ENCODE measurements at regions of chr6 and their contacts with region 1.

Region 1: DNA sequence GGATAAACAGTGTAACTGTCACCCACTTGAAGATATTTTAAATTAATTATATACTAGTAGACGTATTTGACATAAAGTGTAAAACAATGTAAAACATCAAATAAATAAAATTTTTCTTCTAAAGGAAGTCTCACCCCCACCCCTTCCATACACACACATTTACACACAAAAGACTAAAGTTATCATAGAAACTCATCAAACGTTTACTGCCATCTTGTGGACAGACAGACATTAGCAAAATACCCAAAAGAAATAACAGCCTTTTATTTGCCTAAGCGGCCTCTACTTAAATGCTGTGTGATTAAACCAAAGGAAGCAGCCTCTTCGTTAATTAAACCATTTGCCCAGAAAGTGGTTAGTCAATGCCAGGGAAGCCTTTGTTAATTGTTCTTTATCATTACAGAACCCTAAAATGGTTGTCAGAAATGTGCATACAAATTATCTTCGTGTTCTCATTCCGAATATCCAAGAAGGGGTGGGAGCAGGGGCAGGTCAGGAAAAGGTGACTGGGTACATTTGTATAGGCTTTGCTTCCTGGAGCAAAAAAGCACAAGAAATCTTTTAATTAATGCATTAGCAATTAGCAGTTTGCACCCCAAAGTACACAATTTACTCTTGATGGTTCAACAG is 176.2 kb upstream of the SASH1 start:
- DNase-seq: no peak
- H3K4me3 Mint-ChIP-seq: no peak overlapping the region
- H3K27ac Mint-ChIP-seq: no peak overlapping the region
- H3K4me1 Mint-ChIP-seq: no peaks in the 10 kb centered on the region
- H3K27me3 Mint-ChIP-seq: peaks cover 3% of the 10 kb centered on the region

Region 2: DNA sequence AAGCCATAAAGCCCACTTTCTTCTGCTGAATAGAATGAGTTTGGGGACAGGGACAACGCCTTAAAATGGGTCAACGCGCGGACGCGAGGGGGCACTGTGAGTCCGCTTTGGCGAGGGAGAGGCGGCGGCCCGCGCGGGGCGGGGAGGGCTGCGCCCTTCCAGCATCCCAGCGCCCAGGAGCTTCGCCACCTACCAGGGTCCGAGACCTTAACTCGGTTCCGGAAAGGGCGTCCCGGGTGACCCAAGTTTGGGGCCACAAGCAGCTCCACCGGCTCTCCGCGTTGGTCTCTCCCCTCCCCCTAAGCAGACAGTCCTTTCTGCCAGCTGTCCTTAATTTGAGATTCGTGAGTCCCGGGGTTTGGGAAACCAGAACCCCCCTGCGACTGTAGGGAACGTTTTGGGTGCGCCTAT is 659.7 kb before region 1 on chr6:
- CTCF ChIA-PET with region 1: interaction called, 19 read pairs
- DNase-seq: peak; percentile 57
- H3K4me3 Mint-ChIP-seq: no peak overlapping the region
- H3K27ac Mint-ChIP-seq: no peak overlapping the region
- H3K4me1 Mint-ChIP-seq: peaks cover 15% of the 10 kb centered on the region
- H3K27me3 Mint-ChIP-seq: peaks cover 57% of the 10 kb centered on the region

Region 3: GRCh38 chr6:148146717-148147462 is 19.6 kb before region 1 on chr6:
- CTCF ChIA-PET with region 1: interaction called, 11 read pairs
- DNase-seq: peak; percentile 42
- H3K4me3 Mint-ChIP-seq: no peak overlapping the region
- H3K27ac Mint-ChIP-seq: peak overlapping the region; percentile 46
- H3K4me1 Mint-ChIP-seq: peaks cover 7% of the 10 kb centered on the region
- H3K27me3 Mint-ChIP-seq: peaks cover 8% of the 10 kb centered on the region

Region 4: GRCh38 chr6:148593130-148593812 is 426.8 kb after region 1 on chr6:
- CTCF ChIA-PET with region 1: no interaction called
- DNase-seq: no peak
- H3K4me3 Mint-ChIP-seq: no peak overlapping the region
- H3K27ac Mint-ChIP-seq: no peak overlapping the region
- H3K4me1 Mint-ChIP-seq: peaks cover 2% of the 10 kb centered on the region
- H3K27me3 Mint-ChIP-seq: peaks cover 4% of the 10 kb centered on the region